ENCODE measurements at regions of chr16 and their contacts with region 1.

Region 1: GRCh38 chr16:58000706-58001676 is at the start of gene USB1:
- DNase-seq: peak; percentile 91 to 97
- ATAC-seq: peak; percentile 84 to 93
- H3K4me3 ChIP-seq: peak within 1 kb of the TSS; percentile 99
- H3K27ac ChIP-seq: peak within 1 kb of the TSS; percentile 98
- H3K4me1 ChIP-seq: peaks cover 41% of the 10 kb centered on the region
- CTCF ChIP-seq: peak; percentile 77
- EP300 ChIP-seq: no peak
- POLR2A ChIP-seq: peak; percentile 90
- RAD21 ChIP-seq: peak; percentile 48 to 89; a peak in 4 of 5 replicates
- polyA plus RNA-seq, gene USB1: 88.2 and 88.8 TPM in 2 replicates

Region 2: DNA sequence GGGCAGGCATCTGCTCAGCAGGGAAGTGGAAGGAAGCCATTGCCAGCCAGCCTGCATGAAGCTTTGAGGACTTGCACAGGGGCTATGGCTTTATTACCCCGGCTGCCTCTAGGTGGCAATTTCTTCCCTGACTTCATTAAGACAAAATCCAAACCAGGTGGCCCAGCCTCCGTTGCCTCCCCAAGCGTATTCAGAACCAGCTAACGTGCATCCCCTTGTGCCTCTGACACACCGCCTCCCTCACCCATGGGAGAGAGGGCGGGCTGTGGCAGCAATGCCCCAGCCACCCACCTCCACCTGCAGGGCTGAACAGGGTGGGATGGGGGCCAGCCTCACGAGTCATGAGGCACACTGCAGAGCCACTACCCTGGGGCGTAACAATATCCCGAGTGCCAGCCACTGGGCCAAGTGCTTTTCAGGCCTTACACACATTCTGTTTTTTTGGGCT is 205.5 kb before region 1 on chr16:
- CTCF ChIA-PET with region 1: interaction called, 21 read pairs
- POLR2A ChIA-PET with region 1: interaction called, 6 read pairs
- DNase-seq: peak; percentile 79 to 89
- ATAC-seq: peak; percentile 33 to 51; a peak in 5 of 6 replicates
- H3K4me3 ChIP-seq: peak overlapping the region; percentile 53
- H3K27ac ChIP-seq: peak overlapping the region; percentile 91 to 100
- H3K4me1 ChIP-seq: peaks cover 55% of the 10 kb centered on the region
- CTCF ChIP-seq: peak; percentile 51
- EP300 ChIP-seq: no peak
- POLR2A ChIP-seq: no peak
- RAD21 ChIP-seq: peak; percentile 57 to 62

Region 3: DNA sequence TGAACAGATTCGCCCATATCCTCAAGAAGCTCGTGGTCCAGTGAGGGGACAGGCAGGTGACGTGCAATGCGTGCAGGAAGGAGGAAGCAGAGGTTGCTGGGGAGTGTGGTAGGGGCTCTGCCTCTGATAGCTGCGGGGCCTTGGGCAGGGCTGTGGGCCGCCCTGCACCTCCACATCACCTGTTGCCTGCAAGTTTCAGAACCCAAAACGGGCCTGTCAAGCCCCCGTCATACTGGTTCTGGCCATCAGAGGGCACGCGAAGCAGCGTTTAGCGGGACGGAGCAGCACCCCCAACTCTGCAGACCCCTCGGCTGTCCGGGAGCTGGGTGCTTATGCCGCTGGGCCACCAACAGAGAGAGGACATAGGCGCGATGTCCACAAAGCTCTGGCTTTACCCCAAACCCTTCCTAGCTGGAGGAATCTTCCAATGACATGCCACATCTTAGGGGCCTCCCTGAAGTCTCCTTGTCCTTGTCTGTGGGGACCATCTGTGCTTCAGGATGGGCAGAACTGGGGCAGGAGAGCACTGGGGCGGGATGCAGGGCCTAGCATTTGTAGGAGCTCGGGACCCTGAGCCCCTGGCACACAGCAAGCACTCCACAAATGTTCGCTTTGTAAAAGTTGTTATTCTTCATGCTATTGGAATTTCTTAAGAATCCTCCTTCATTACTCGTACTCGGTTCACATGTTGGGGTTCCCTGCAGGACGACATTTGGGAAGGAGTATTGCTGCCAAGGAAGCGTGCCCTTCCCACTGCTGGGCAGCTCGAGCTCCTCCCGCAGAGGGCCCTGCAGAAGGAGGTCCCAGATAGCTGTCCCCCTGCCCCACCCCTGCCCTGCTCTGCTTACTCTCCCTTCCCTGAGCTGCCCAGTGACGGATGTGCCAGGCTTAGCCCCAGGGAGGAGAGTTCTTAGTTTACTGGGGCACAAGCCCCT is 94.3 kb before region 1 on chr16:
- CTCF ChIA-PET with region 1: interaction called, 160 read pairs
- POLR2A ChIA-PET with region 1: no interaction called
- DNase-seq: no peak
- ATAC-seq: peak; percentile 54 to 74; a peak in 5 of 6 replicates
- H3K4me3 ChIP-seq: no peak overlapping the region
- H3K27ac ChIP-seq: peak overlapping the region in 1 of 2 experiments; percentile 17; a peak in 2 of 6 replicates
- H3K4me1 ChIP-seq: peaks cover 5% of the 10 kb centered on the region; the same call in 1 of the 3 replicates
- CTCF ChIP-seq: peak; percentile 32; the same call in 1 of the 3 replicates
- EP300 ChIP-seq: no peak
- POLR2A ChIP-seq: no peak
- RAD21 ChIP-seq: peak; percentile 48 to 53

Region 4: GRCh38 chr16:57976331-57976796 is 24.6 kb before region 1 on chr16:
- CTCF ChIA-PET with region 1: interaction called, 11 read pairs
- POLR2A ChIA-PET with region 1: no interaction called
- DNase-seq: no peak
- ATAC-seq: peak; percentile 28 to 57; a peak in 3 of 6 replicates
- H3K4me3 ChIP-seq: no peak overlapping the region
- H3K27ac ChIP-seq: peak overlapping the region in 1 of 2 experiments; percentile 23; a peak in 3 of 6 replicates
- H3K4me1 ChIP-seq: 0 out of 3 replicates have a peak, but pooled peaks cover 3% of the 10 kb centered on the region
- CTCF ChIP-seq: no peak
- EP300 ChIP-seq: no peak
- POLR2A ChIP-seq: no peak
- RAD21 ChIP-seq: no peak

Region 5: DNA sequence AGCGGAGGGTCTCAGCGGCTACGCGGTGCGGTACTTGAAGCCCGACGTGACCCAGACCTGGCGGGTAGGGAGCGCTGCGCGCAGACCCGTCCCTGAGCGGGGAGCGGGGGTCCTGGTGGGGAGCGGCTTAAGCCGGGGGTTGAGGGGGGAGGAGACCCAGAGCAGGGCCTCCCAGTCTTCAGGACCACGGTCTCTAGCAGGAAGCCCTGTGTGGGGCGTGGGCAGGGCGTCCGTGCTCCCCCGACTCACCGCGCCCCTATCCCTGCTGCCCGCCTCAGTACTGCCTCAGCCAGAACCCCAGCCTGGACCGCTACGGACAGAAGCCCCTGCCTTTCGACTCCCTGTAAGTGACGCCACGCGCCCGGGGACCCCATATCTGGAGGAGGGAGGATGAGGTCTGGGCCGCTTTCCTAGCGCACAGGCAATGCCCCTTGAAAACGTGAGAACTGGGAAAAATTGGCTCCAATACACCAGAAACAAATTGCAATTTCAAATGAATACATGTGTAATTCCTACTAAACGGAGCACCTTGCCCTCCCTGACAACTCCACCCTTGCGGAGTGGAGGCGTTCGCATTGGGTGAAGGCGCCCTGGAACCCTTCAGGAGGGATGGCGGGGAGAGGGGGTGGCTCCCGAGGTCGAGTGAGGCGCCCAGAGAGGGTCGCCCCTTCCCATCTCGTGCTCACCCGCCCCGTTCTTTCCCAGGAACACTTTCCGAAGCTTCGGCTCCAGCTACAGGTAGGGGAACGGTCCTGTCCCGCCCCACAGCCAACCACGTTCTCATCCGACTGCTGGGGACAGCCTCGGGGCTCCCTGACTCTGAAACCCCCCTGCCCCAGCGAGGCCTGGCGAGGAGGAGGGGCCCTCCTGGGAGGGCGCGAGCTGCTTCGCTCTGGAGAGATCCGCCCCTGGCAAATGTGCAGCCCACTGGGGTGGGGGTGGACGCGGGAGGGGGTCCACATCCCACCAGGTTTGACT is 15.5 kb before region 1 on chr16:
- CTCF ChIA-PET with region 1: interaction called, 29 read pairs
- POLR2A ChIA-PET with region 1: interaction called, 3 read pairs
- DNase-seq: no peak
- ATAC-seq: peak; percentile 16 to 57; a peak in 3 of 6 replicates
- H3K4me3 ChIP-seq: peak overlapping the region; percentile 54
- H3K27ac ChIP-seq: peak overlapping the region in 1 of 2 experiments; percentile 86; a peak in 3 of 6 replicates
- H3K4me1 ChIP-seq: peaks cover 12% of the 10 kb centered on the region
- CTCF ChIP-seq: no peak
- EP300 ChIP-seq: no peak
- POLR2A ChIP-seq: no peak
- RAD21 ChIP-seq: no peak

Measured in A549 (cell line).